GM12878 (cell line): ENCODE measurements at regions of chr19 and their contacts with region 1.

Region 1: GRCh38 chr19:52343548-52343947 is 7.5 kb downstream of the ZNF610 start:
- DNase-seq: no peak
- ATAC-seq: peak; percentile 65
- H3K4me3 ChIP-seq: no peak overlapping the region
- H3K27ac ChIP-seq: no peak overlapping the region
- H3K4me1 ChIP-seq: no peaks in the 10 kb centered on the region
- H3K27me3 ChIP-seq: no peaks in the 10 kb centered on the region
- CTCF ChIP-seq: peak; percentile 33 to 55 (median 50); a peak in 4 of 6 replicates
- EP300 ChIP-seq: no peak
- POLR2A ChIP-seq: no peak
- RAD21 ChIP-seq: peak; percentile 63

Region 2: DNA sequence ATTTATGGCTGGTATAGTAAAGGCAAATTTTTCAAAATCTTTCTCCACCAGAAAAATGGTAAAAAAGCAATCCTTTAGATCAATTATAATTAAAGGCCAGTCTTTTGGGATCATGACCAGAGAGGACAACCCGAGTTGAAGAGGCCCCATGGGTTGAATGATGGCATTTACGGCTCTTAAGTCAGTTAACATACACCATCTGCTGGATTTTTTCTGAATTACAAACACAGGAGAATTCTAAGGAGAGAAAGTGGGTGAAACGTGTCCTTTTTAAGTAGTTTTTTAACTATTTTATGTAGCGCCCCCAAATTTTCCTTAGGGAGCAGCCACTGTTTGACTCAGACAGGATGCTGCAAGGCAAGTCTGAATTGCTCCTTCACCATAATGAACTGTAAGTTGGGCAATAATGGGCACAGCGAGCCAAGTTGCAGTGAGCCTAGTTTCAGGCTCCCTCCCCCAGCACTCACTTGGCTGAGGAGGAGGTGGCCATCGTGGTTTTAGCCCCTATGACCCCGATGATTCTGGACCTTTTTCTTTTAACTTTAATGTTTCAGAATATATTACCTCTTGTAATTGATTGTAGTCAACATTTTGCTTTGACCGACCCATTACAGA is 404.9 kb after region 1 on chr19:
- CTCF ChIA-PET with region 1: interaction called, 4 read pairs
- POLR2A ChIA-PET with region 1: no interaction called
- RAD21 ChIA-PET with region 1: no interaction called
- SMC1A ChIA-PET with region 1: interaction called, 4 read pairs
- in situ Hi-C with region 1: no loop called
- intact Hi-C with region 1: loop called (anchors 10 kb)
- DNase-seq: peak; percentile 4
- ATAC-seq: 0 out of 3 replicates have a peak, but pooled peaks have one; percentile 37
- H3K4me3 ChIP-seq: no peak overlapping the region
- H3K27ac ChIP-seq: no peak overlapping the region
- H3K4me1 ChIP-seq: no peaks in the 10 kb centered on the region
- H3K27me3 ChIP-seq: no peaks in the 10 kb centered on the region
- CTCF ChIP-seq: peak; percentile 23 to 48 (median 26); a peak in 4 of 6 replicates
- EP300 ChIP-seq: no peak
- POLR2A ChIP-seq: no peak
- RAD21 ChIP-seq: peak; percentile 74